Activated CD4-positive, alpha-beta T cell treated with anti-CD3 and anti-CD28 coated beads for 36 hours (primary cell): ENCODE measurements at regions of chr17 and their contacts with region 1.

Region 1: GRCh38 chr17:57243171-57243948 is 13.0 kb upstream of the MSI2 start:
- DNase-seq: peak; percentile 87
- ATAC-seq: peak; percentile 83
- H3K4me3 Mint-ChIP-seq: no peak overlapping the region
- H3K27ac Mint-ChIP-seq: peak overlapping the region; percentile 29
- H3K4me1 Mint-ChIP-seq: peaks cover 4% of the 10 kb centered on the region
- H3K27me3 Mint-ChIP-seq: peaks cover 2% of the 10 kb centered on the region

Region 2: DNA sequence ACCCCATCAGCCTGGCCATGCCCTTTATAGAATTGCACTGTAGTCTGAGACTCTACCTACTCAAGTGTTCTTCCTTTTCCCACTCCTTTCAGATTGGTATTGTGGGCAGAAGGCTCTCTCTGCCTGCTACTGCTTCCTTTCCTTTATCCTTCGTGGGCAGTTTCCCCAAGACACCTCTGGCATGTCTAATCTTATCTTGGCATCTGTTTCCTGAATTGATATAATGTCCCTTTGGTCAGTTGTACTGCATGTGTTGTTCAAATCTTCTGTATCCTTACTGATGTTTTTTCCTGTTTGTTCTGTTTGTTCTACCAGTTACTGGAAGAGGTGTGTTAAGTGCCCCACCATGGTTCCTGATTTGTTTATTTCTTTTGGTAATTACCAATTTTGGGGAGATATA is 16.6 kb before region 1 on chr17:
- CTCF ChIA-PET with region 1: interaction called, 12 read pairs
- POLR2A ChIA-PET with region 1: no interaction called
- intact Hi-C with region 1: no loop called
- DNase-seq: no peak
- ATAC-seq: no peak
- H3K4me3 Mint-ChIP-seq: no peak overlapping the region
- H3K27ac Mint-ChIP-seq: no peak overlapping the region
- H3K4me1 Mint-ChIP-seq: no peaks in the 10 kb centered on the region
- H3K27me3 Mint-ChIP-seq: peaks cover 8% of the 10 kb centered on the region

Region 3: DNA sequence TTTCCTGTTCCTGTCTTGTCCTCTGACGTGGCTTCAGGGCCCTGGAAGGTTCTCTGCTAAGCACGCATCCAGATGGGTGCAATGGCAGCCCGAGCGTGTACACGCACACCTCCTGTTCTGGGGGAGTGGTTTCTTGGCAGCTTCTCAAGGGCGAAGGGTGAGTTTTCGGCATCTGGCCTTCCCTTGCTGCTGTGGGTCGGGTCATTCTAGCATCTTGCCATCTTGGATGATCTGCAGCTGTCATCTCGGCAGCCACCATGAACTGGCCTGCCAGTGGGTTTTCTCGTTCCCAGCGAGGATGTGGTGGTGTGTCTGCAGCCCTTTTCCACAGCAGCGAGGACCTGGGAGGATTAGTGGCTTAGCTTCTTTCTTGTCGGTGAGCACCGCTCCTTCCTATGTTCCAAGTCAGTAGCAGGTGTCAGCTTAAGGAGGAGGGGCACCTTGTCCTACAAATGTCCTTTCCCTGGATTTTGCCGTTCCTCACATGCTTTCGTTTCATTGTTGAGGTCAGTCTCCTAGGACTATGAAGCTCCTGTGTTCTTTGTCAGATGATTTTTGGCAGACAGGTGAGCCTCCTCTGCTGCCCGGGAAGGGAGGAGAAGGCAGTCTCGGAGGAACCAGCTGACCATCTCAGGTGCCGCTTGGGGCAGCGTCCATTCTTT is 23.7 kb after region 1 on chr17:
- CTCF ChIA-PET with region 1: interaction called, 20 read pairs
- POLR2A ChIA-PET with region 1: no interaction called
- intact Hi-C with region 1: no loop called
- DNase-seq: no peak
- ATAC-seq: no peak
- H3K4me3 Mint-ChIP-seq: no peak overlapping the region
- H3K27ac Mint-ChIP-seq: no peak overlapping the region
- H3K4me1 Mint-ChIP-seq: peaks cover 34% of the 10 kb centered on the region
- H3K27me3 Mint-ChIP-seq: no peaks in the 10 kb centered on the region

Region 4: GRCh38 chr17:57408071-57408811 is 164.9 kb after region 1 on chr17:
- CTCF ChIA-PET with region 1: interaction called, 30 read pairs
- POLR2A ChIA-PET with region 1: no interaction called
- intact Hi-C with region 1: loop called in 1 of 2 experiments (anchors 2 kb)
- DNase-seq: peak; percentile 72
- ATAC-seq: peak; percentile 82
- H3K4me3 Mint-ChIP-seq: peak overlapping the region; percentile 7
- H3K27ac Mint-ChIP-seq: peak overlapping the region; percentile 44
- H3K4me1 Mint-ChIP-seq: peaks cover 40% of the 10 kb centered on the region
- H3K27me3 Mint-ChIP-seq: no peaks in the 10 kb centered on the region

Region 5: GRCh38 chr17:57518587-57519581 is 275.5 kb after region 1 on chr17:
- CTCF ChIA-PET with region 1: interaction called, 7 read pairs
- POLR2A ChIA-PET with region 1: no interaction called
- intact Hi-C with region 1: loop called (anchors 2 to 10 kb)
- DNase-seq: no peak
- ATAC-seq: no peak
- H3K4me3 Mint-ChIP-seq: no peak overlapping the region
- H3K27ac Mint-ChIP-seq: no peak overlapping the region
- H3K4me1 Mint-ChIP-seq: peaks cover 10% of the 10 kb centered on the region
- H3K27me3 Mint-ChIP-seq: no peaks in the 10 kb centered on the region

Region 6: DNA sequence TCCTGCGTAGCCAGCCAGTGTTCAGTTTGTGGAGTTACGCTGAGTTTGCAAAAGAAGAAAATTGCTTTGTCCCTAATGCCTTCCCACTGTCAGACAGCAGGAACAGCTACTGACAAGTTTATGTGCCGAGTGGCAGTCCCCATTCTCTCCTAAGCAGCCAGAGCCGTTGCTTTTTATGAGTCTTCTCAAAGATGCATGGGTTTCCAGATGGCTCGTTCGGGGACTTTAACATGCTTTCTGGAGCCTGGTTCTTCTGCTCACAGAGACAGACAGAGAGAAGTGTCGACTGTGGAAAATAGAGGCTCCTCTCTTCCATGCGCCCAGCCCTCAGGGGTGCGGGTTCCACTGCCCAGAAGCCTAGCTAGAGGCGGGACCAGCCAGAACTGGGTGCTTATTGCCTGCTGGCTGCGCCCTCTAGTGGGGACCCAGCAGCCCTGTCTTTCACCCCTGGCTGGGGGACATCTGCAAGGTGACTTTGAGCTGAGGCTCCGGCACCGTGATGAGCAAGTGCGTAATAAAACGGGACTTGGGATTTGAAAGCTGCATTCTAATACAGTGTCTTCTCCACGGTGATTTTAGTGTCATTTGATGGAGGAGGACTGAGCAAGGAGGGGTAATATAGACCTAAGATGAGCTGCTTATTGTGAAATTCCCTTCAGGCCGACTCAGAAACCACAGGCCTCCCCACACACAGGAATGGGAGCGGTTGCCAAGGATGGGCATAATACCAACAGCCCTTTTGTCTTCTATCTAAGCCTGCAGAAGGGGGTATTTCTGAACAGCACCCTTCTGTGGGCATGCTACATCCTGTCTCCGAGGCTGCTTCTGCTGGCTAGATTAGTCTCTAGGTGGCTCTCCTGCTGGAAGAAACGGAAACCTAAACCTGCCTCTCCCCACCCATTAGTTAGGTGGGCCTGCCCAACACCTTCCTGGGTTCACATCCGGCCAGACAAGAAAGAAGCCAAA is 428.6 kb after region 1 on chr17:
- CTCF ChIA-PET with region 1: interaction called, 56 read pairs
- POLR2A ChIA-PET with region 1: interaction called, 3 read pairs
- intact Hi-C with region 1: loop called (anchors 1 to 5 kb)
- DNase-seq: peak; percentile 85
- ATAC-seq: peak; percentile 83
- H3K4me3 Mint-ChIP-seq: no peak overlapping the region
- H3K27ac Mint-ChIP-seq: peak overlapping the region; percentile 4
- H3K4me1 Mint-ChIP-seq: peaks cover 17% of the 10 kb centered on the region
- H3K27me3 Mint-ChIP-seq: no peaks in the 10 kb centered on the region

Region 7: DNA sequence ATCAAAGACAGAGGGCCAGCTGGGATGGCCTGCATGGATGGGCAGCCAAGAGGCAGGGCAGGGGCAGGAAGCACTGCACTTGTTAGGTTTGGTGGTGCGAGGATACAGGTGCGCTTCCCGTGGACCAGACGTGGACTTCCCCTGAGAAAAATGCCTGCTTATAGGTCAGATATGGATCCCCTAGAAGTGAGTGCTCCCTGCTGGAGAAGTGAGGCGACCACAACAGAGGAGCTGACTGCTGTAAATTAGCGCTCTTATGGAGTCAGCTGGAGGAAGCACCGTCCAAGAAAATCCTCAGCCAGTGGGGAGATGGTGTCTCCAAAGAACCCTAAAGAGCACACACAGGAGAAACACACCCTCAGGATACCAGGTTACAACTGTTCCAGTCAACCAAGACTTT is 529.4 kb after region 1 on chr17:
- CTCF ChIA-PET with region 1: no interaction called
- POLR2A ChIA-PET with region 1: no interaction called
- intact Hi-C with region 1: no loop called
- DNase-seq: no peak
- ATAC-seq: no peak
- H3K4me3 Mint-ChIP-seq: no peak overlapping the region
- H3K27ac Mint-ChIP-seq: no peak overlapping the region
- H3K4me1 Mint-ChIP-seq: no peaks in the 10 kb centered on the region
- H3K27me3 Mint-ChIP-seq: peaks cover 40% of the 10 kb centered on the region

Region 8: DNA sequence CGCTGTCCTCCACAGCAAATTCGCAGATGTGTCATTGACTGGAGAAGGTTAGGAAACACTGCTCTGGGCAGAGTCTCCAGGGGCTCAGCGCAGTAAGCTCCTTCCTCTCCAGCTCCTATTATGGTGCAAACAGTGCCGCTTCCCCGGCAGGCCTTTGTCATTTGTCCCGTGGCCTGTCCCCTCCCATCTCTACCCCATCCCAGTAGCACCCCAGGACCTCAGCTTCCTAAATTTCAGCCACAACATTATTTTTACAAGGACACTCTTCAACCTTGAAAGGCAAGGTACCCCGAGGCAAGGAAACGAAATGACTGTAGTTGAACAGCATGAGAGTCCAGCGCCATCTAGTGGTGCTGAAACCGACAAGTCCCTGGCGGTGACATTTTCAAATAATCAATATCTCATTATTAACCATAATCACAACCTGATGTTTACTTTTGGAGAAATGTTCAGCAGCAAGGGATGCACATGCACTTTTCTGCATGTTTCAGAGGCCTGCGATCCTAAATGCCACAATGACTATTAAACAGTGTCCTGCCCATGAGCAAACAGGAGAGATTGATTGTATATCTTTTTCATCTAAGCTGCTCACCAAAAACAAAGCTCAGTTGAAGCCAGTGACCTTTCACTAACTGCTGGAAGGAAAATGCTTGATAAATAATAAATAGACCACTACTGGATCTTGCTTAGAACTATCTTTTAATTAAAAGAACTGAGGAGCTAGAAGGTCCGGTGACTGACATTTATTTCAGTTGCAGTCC is 590.0 kb after region 1 on chr17:
- CTCF ChIA-PET with region 1: interaction called, 25 read pairs
- POLR2A ChIA-PET with region 1: interaction called, 3 read pairs
- intact Hi-C with region 1: loop called (anchors 1 kb)
- DNase-seq: peak; percentile 84
- ATAC-seq: peak; percentile 86
- H3K4me3 Mint-ChIP-seq: no peak overlapping the region
- H3K27ac Mint-ChIP-seq: no peak overlapping the region
- H3K4me1 Mint-ChIP-seq: peaks cover 7% of the 10 kb centered on the region
- H3K27me3 Mint-ChIP-seq: no peaks in the 10 kb centered on the region